ENCODE measurements at regions of chr3 and their contacts with region 1.

Region 1: GRCh38 chr3:170037463-170038433 is at the start of gene GPR160:
- DNase-seq: peak; percentile 75
- H3K4me3 Mint-ChIP-seq: peak within 1 kb of the TSS; percentile 84
- H3K27ac Mint-ChIP-seq: peak within 1 kb of the TSS; percentile 33
- H3K4me1 Mint-ChIP-seq: peaks cover 22% of the 10 kb centered on the region
- H3K27me3 Mint-ChIP-seq: no peaks in the 10 kb centered on the region
- total RNA-seq, gene GPR160: 7.7 and 9.6 TPM in 2 replicates

Region 2: DNA sequence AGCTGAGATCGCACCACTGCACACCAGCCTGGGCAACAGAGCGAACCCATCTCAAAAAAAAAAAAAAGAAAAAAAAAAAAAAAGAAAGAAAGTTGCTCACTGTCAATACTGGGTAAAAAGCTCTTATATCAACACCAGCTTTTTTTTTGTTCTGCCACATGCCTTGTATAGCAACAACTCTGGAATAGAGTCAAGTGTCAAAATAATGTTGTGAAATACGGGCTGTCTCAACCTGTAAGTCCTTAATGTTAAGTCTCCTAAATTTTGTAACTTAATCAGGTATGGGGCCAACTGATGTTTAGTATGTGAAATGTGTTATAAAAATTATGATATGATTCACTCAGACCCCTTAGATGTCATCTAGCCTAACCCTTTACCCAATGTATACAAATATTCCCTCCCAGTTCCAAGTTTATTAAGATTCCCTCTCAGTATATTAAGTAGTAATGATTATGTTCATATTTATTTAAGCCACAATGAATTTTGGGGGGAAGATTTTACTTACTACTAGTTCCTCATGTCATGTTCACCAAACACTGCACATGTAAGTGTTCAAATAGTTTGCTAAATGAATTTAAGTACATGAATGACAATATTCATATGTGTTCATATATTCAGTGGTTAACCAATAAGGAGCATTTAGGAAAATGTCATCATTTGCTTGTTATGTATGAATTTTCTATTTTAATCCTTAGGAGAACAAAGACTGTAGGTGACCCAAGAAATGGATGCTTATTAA is 52.3 kb after region 1 on chr3:
- intact Hi-C with region 1: loop called (anchors 5 kb)
- DNase-seq: no peak
- H3K4me3 Mint-ChIP-seq: no peak overlapping the region
- H3K27ac Mint-ChIP-seq: no peak overlapping the region
- H3K4me1 Mint-ChIP-seq: peaks cover 5% of the 10 kb centered on the region
- H3K27me3 Mint-ChIP-seq: no peaks in the 10 kb centered on the region

Region 3: DNA sequence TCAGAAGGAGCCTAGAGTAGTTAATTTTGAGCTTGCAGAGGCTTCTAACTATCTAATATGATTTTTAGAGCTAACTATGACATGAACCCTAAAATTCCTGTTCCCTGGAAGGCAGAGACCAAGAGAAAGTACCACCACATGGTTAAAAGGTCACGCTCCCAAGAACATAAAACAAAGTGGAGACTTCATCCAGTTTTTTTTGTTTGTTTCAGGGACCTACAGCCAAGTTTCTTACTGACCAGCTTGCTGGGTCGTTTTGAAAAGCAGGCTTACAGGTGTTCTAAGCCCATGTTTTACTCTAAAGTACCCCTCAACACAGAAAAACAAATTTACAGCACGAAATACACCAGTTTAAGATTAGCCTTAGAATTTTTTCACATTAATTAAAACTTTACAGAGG is 280.2 kb after region 1 on chr3:
- intact Hi-C with region 1: no loop called
- DNase-seq: no peak
- H3K4me3 Mint-ChIP-seq: no peak overlapping the region
- H3K27ac Mint-ChIP-seq: no peak overlapping the region
- H3K4me1 Mint-ChIP-seq: no peaks in the 10 kb centered on the region
- H3K27me3 Mint-ChIP-seq: peaks cover 12% of the 10 kb centered on the region